Prostate gland (tissue), 2 donors: ENCODE measurements at regions of chr12 and their contacts with region 1.

Region 1: DNA sequence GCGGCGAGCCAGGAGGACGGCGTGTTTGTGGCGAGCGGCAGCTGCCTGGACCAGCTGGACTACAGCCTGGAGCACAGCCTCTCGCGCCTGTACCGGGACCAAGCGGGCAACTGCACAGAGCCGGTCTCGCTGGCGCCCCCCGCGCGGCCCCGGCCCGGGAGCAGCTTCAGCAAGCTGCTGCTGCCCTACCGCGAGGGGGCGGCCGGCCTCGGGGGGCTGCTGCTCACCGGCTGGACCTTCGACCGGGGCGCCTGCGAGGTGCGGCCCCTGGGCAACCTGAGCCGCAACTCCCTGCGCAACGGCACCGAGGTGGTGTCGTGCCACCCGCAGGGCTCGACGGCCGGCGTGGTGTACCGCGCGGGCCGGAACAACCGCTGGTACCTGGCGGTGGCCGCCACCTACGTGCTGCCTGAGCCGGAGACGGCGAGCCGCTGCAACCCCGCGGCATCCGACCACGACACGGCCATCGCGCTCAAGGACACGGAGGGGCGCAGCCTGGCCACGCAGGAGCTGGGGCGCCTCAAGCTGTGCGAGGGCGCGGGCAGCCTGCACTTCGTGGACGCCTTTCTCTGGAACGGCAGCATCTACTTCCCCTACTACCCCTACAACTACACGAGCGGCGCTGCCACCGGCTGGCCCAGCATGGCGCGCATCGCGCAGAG is 873 bp downstream of the PLXNC1 start:
- DNase-seq: no peak
- H3K4me3 ChIP-seq: peak overlapping the region; percentile 44 to 46
- H3K27ac ChIP-seq: no peak overlapping the region
- H3K4me1 ChIP-seq: peaks cover 3% of the 10 kb centered on the region
- H3K27me3 ChIP-seq: peaks cover 9% of the 10 kb centered on the region
- CTCF ChIP-seq: peak in 1 of 4 experiments; percentile 18
- POLR2A ChIP-seq: no peak

Region 2: DNA sequence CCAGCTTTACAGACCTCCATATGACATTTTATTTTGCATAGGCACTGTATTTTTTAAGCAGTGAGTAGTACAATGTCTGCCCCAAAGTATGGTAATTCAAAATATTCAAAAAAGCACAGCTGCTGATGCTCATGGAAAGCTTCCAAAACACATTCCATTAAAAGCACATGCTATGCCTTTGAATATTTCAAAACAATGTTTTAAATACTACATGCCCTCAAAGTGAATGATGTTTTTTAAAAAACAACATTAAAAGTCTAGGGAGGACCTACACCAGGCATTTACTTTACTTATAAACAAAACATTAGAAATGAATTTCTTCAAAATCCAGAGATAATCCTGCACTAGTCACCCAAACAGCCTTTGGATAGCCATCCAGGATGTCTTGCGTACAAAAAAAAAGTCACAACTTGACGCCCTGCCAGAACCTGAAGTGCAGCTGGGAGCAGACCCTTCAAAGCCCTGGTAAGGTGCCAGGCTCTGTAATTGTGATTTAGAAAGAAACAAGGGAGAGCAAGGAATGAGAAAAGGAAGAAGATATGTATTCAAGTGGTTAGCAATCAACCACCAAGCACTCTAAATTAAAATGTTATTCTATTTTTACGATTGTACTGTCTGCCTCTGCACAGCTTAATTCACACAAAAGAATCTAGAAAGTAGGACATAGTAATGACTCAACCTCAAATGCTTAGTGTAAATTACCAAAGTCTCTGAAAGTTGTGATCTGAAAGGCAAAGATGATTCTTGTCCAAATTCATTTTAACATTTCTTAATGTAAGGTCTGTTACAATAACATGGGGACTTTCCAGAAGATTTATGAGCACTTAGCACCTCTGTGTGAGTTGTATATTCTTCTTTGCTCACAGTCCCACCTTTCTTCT is 278.5 kb after region 1 on chr12:
- intact Hi-C with region 1: loop called (anchors 5 kb)
- DNase-seq: no peak
- H3K4me3 ChIP-seq: no peak overlapping the region
- H3K27ac ChIP-seq: no peak overlapping the region
- H3K4me1 ChIP-seq: peaks cover 4% of the 10 kb centered on the region
- H3K27me3 ChIP-seq: no peaks in the 10 kb centered on the region
- CTCF ChIP-seq: no peak
- POLR2A ChIP-seq: no peak

Region 3: DNA sequence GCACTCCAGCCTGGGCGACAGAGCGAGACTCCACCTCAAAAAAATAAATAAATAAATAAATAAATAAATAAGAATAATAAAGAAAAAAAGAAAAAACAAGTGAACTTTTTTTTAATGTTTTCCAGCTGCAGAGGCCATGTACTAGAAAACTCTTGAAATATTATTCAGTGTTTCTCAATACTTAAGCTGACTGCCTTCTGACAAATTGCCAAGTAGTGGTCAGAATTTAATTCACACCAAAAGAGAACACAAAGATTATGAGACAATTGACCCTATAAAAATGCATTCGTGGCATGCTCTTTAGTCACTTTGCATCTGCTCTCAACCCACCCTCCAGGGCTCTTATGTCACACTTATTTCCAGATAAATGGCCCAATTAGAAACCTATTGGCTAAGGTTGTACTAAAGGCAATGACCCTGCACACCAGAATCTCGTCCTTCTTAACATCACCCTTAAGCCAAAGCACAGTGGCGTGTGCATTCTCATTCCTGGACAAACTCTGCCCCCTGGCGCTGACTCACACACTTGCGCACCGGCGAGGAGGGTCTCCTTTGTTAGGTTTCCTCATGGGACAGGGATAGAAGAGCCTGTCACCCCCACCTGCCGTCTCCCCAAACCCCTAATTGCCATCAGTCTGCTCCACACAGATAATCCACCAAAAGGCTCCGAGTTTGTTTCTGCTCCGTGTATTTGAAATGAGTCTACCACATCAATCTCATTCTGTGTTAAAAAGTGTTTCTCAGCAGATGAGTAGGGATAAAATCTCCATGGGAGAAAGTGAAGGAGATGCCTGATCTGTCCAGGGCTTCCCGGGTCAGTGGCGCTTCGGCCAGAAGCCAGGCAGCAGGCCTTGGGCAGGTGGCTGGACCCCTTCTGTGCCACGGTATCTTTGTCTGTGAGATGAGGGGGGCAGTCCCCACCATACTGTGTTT is 383.5 kb after region 1 on chr12:
- intact Hi-C with region 1: loop called (anchors 5 kb)
- DNase-seq: peak; percentile 31
- H3K4me3 ChIP-seq: no peak overlapping the region
- H3K27ac ChIP-seq: no peak overlapping the region
- H3K4me1 ChIP-seq: no peaks in the 10 kb centered on the region
- H3K27me3 ChIP-seq: no peaks in the 10 kb centered on the region
- CTCF ChIP-seq: peak; percentile 48 to 77 (median 65)
- POLR2A ChIP-seq: no peak